BJ (cell line): ENCODE measurements at regions of chr1 and their contacts with region 1.

Region 1: DNA sequence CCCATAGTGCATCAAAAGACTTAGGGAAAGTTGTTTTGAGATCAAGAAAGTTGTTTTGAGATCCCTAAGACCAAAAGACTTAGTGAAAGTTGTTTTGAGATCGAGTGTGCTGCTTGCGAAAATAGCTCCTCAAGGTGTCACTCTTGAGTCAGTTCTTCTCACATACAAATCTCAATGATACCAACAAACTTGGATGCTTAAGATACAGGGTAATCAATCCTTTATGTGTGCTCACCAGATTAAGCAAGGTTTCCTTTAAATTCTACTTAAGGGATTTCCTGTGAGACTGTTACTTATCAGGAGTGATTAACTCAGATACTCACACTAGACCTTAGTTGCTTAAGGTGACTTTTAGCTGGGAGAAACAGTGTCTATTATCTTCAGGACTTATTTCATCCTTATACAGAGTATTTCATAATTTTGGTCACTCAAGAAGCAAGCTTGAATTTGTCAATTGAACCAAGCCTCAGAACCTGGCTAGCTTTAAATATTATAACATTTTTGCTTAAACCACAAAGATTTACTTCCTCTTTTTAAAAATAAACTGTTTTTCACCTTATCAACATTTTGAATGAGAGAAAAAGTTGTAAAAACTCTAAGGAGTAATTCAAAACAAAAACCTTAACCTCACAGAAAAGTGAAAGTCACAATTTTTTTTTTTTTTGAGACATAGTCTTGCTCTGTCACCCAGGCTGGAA is 8.0 kb upstream of the RLF start:
- DNase-seq: no peak
- H3K4me3 ChIP-seq: no peak overlapping the region
- H3K27me3 ChIP-seq: peaks cover 6% of the 10 kb centered on the region; the same call in 1 of the 2 replicates
- CTCF ChIP-seq: peak; percentile 75

Region 2: DNA sequence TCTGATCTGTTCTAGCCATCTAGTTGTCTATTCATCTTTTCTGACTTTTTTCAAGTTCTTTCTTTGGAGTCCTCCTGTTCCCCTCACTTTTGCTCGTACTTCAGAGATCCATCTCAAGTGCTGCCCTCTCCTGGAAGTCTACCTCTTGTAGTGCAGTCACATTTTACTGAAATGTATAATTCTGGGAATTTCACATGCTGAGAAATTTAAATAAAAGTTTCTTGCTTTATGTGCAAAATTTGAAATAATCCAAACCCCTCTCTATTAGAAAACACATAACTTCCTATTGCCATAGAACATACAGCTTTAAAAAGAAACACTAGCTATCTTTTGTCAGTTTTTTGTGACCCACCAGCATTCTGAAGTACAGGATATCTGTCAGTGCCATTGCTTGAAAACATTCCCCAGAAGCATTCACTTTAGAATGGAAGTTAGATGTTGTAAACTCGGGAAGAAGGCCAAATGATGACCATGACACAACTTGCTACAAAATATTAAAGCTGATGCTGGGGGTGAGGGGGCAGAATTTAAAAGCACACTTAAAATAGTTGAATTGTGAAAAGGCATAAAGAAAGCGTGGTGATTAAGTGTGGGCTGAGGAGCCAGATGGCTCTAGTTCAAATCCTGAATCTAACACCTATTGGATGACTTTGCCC is 30.0 kb after region 1 on chr1:
- CTCF ChIA-PET with region 1: interaction called, 11 read pairs
- POLR2A ChIA-PET with region 1: no interaction called
- DNase-seq: no peak
- H3K4me3 ChIP-seq: no peak overlapping the region
- H3K27me3 ChIP-seq: no peaks in the 10 kb centered on the region
- CTCF ChIP-seq: peak; percentile 25; the same call in 1 of the 2 replicates

Region 3: GRCh38 chr1:40315239-40315794 is 162.1 kb after region 1 on chr1:
- CTCF ChIA-PET with region 1: interaction called, 53 read pairs
- POLR2A ChIA-PET with region 1: no interaction called
- DNase-seq: peak; percentile 12
- H3K4me3 ChIP-seq: peak overlapping the region; percentile 26
- H3K27me3 ChIP-seq: peaks cover 25% of the 10 kb centered on the region
- CTCF ChIP-seq: peak; percentile 96

Region 4: DNA sequence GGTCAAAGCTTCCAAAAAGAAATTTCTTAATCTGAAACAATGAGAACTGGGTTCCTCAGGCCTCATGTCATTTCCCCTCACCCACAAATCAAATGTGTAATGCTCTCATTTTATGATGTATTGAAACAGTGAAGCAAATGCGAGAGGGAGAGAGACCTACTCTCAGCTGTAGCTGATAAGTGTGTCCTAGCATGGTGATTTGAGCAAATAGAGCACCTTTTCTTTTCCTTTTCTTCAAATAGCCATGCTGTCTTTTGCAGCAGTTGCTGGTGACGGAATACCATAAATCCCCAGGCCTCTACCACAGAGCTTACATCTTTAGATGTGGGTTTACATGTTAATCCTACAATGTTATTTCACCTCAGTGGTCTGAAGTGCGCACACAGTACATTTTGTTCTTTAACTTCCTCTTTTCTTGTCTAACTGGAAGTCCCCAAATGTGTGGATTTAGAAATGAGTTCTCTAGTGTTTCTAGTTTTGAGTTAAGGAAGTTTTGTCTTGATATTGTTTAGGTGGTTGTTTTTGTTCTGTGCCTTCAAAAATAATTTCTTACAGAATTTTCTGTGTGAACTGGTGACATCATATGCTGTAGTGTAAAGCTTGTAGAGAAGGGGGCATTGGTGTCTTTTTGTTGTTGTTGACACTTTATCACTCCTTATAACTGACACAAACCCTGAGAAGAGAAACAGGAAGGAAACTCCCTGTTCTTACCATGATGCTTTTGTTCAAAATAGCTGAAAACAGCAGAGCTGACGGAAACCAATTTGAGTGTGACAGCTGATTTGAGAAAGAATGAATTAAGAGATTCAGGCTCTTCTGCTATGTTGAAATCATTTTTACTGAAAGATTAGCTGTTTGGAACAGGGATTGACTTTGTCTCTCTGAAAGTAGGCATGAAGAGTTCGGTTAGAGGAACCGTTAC is 232.5 kb after region 1 on chr1:
- CTCF ChIA-PET with region 1: interaction called, 10 read pairs
- POLR2A ChIA-PET with region 1: no interaction called
- DNase-seq: no peak
- H3K4me3 ChIP-seq: no peak overlapping the region
- H3K27me3 ChIP-seq: no peaks in the 10 kb centered on the region
- CTCF ChIP-seq: no peak